Esophagus muscularis mucosa (tissue), 4 donors: ENCODE measurements at regions of chr6 and their contacts with region 1.

Region 1: GRCh38 chr6:170529839-170530469 is 23.2 kb downstream of the PSMB1 start:
- DNase-seq: no peak
- H3K4me3 ChIP-seq: no peak overlapping the region
- H3K27ac ChIP-seq: no peak overlapping the region
- H3K4me1 ChIP-seq: peaks cover 0 to 19% (median 12%) of the 10 kb centered on the region in 4 donors
- H3K27me3 ChIP-seq: no peaks in the 10 kb centered on the region
- CTCF ChIP-seq: peak; percentile 69 to 89 (median 77)
- EP300 ChIP-seq: no peak
- POLR2A ChIP-seq: no peak

Region 2: GRCh38 chr6:169789982-169790927 is 739.7 kb before region 1 on chr6:
- intact Hi-C with region 1: loop called (anchors 5 kb)
- DNase-seq: no peak
- H3K4me3 ChIP-seq: peak overlapping the region; percentile 51 to 65 (median 54)
- H3K27ac ChIP-seq: peak overlapping the region; percentile 70 to 91 (median 80)
- H3K4me1 ChIP-seq: peaks cover 14 to 25% (median 23%) of the 10 kb centered on the region in 4 donors
- H3K27me3 ChIP-seq: no peaks in the 10 kb centered on the region
- CTCF ChIP-seq: peak in 2 of 3 experiments; percentile 95 to 97
- EP300 ChIP-seq: no peak
- POLR2A ChIP-seq: no peak

Region 3: GRCh38 chr6:169831450-169832246 is 698.3 kb before region 1 on chr6:
- intact Hi-C with region 1: loop called (anchors 2 kb)
- DNase-seq: peak; percentile 94
- H3K4me3 ChIP-seq: no peak overlapping the region
- H3K27ac ChIP-seq: no peak overlapping the region
- H3K4me1 ChIP-seq: peaks cover 0 to 7% (median 4%) of the 10 kb centered on the region in 4 donors
- H3K27me3 ChIP-seq: peaks cover 0 to 31% (median 0%) of the 10 kb centered on the region in 4 donors
- CTCF ChIP-seq: peak; percentile 74 to 89 (median 83)
- EP300 ChIP-seq: no peak
- POLR2A ChIP-seq: no peak

Region 4: GRCh38 chr6:170260723-170261122 is 269.2 kb before region 1 on chr6:
- intact Hi-C with region 1: no loop called
- DNase-seq: no peak
- H3K4me3 ChIP-seq: no peak overlapping the region
- H3K27ac ChIP-seq: no peak overlapping the region
- H3K4me1 ChIP-seq: peaks cover 0 to 3% (median 0%) of the 10 kb centered on the region in 4 donors
- H3K27me3 ChIP-seq: peaks cover 0 to 12% (median 0%) of the 10 kb centered on the region in 4 donors
- CTCF ChIP-seq: no peak
- EP300 ChIP-seq: no peak
- POLR2A ChIP-seq: no peak

Region 5: GRCh38 chr6:170329321-170329720 is 200.6 kb before region 1 on chr6:
- intact Hi-C with region 1: no loop called
- DNase-seq: no peak
- H3K4me3 ChIP-seq: no peak overlapping the region
- H3K27ac ChIP-seq: no peak overlapping the region
- H3K4me1 ChIP-seq: no peaks in the 10 kb centered on the region
- H3K27me3 ChIP-seq: no peaks in the 10 kb centered on the region
- CTCF ChIP-seq: no peak
- EP300 ChIP-seq: no peak
- POLR2A ChIP-seq: no peak

Region 6: GRCh38 chr6:170596426-170596825 is 66.5 kb after region 1 on chr6:
- intact Hi-C with region 1: no loop called
- DNase-seq: no peak
- H3K4me3 ChIP-seq: no peak overlapping the region
- H3K27ac ChIP-seq: no peak overlapping the region
- H3K4me1 ChIP-seq: no peaks in the 10 kb centered on the region
- H3K27me3 ChIP-seq: peaks cover 0 to 15% (median 0%) of the 10 kb centered on the region in 4 donors
- CTCF ChIP-seq: no peak
- EP300 ChIP-seq: no peak
- POLR2A ChIP-seq: no peak